ENCODE measurements at regions of chr9 and their contacts with region 1.

Region 1: GRCh38 chr9:131739980-131740648 is at the start of gene RAPGEF1:
- DNase-seq: peak; percentile 34 to 63
- H3K4me3 ChIP-seq: peak within 1 kb of the TSS; percentile 52 to 93 (median 66)
- H3K27ac ChIP-seq: peak within 1 kb of the TSS; percentile 77 to 96
- H3K4me1 ChIP-seq: peaks cover 5 to 9% of the 10 kb centered on the region in 2 donors
- H3K27me3 ChIP-seq: no peaks in the 10 kb centered on the region
- CTCF ChIP-seq: peak; percentile 48 to 98 (median 50)
- POLR2A ChIP-seq: no peak
- total RNA-seq, gene RAPGEF1: 35.3 to 38.0 (median 37.3) TPM

Region 2: GRCh38 chr9:131590908-131591844 is 148.9 kb before region 1 on chr9:
- intact Hi-C with region 1: loop called (anchors 5 kb)
- DNase-seq: peak; percentile 64 to 66
- H3K4me3 ChIP-seq: no peak overlapping the region
- H3K27ac ChIP-seq: no peak overlapping the region
- H3K4me1 ChIP-seq: no peaks in the 10 kb centered on the region
- H3K27me3 ChIP-seq: no peaks in the 10 kb centered on the region
- CTCF ChIP-seq: peak; percentile 56 to 94 (median 88)
- POLR2A ChIP-seq: no peak

Region 3: GRCh38 chr9:131868766-131869165 is 128.7 kb after region 1 on chr9:
- intact Hi-C with region 1: no loop called
- DNase-seq: no peak
- H3K4me3 ChIP-seq: no peak overlapping the region
- H3K27ac ChIP-seq: no peak overlapping the region
- H3K4me1 ChIP-seq: no peaks in the 10 kb centered on the region
- H3K27me3 ChIP-seq: no peaks in the 10 kb centered on the region
- CTCF ChIP-seq: no peak
- POLR2A ChIP-seq: no peak

Measured in breast epithelium (tissue), 4 donors.